ENCODE measurements at regions of chr11 and their contacts with region 1.

Region 1: GRCh38 chr11:78564490-78565467 is 9.9 kb downstream of the NARS2 start:
- DNase-seq: peak in 1 of 3 donors; percentile 89
- ATAC-seq: peak; percentile 68
- H3K4me3 ChIP-seq: no peak overlapping the region
- H3K4me1 ChIP-seq: peaks cover 21% of the 10 kb centered on the region
- CTCF ChIP-seq: peak; percentile 32

Region 2: GRCh38 chr11:78228467-78228866 is 336.3 kb before region 1 on chr11:
- intact Hi-C with region 1: loop called in 1 of 2 experiments (anchors 10 kb)
- DNase-seq: peak in 1 of 3 donors; percentile 68
- ATAC-seq: peak; percentile 89
- H3K4me3 ChIP-seq: no peak overlapping the region
- H3K4me1 ChIP-seq: no peaks in the 10 kb centered on the region
- CTCF ChIP-seq: peak; percentile 17

Region 3: DNA sequence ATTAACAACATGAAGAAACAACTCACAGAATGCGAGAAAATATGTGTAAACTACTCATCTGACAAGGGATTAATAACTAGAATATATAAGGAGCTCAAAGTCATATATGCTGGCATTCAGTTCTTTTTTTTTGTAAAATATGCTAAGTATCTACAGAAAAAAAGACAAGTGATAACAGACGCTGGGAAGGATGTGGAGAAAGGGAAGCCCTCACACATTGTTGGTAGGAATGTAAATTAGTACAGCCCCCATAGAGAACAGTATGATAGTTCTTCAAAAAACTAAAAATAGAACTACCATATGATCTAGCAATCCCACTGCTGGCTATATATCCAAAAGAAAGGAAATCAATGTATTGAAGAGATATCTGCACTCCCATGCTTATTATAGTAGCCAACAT is 161.0 kb before region 1 on chr11:
- intact Hi-C with region 1: no loop called
- DNase-seq: no peak
- ATAC-seq: no peak
- H3K4me3 ChIP-seq: no peak overlapping the region
- H3K4me1 ChIP-seq: no peaks in the 10 kb centered on the region
- CTCF ChIP-seq: no peak

Region 4: GRCh38 chr11:78416305-78417178 is 148.2 kb before region 1 on chr11:
- intact Hi-C with region 1: loop called in 1 of 2 experiments (anchors 5 kb)
- DNase-seq: peak; percentile 82 to 91 (median 91)
- ATAC-seq: peak; percentile 71
- H3K4me3 ChIP-seq: peak overlapping the region; percentile 62
- H3K4me1 ChIP-seq: peaks cover 13% of the 10 kb centered on the region
- CTCF ChIP-seq: peak; percentile 38

Measured in mucosa of descending colon (tissue), 3 donors.